ENCODE measurements at regions of chr6 and their contacts with region 1.

Region 1: DNA sequence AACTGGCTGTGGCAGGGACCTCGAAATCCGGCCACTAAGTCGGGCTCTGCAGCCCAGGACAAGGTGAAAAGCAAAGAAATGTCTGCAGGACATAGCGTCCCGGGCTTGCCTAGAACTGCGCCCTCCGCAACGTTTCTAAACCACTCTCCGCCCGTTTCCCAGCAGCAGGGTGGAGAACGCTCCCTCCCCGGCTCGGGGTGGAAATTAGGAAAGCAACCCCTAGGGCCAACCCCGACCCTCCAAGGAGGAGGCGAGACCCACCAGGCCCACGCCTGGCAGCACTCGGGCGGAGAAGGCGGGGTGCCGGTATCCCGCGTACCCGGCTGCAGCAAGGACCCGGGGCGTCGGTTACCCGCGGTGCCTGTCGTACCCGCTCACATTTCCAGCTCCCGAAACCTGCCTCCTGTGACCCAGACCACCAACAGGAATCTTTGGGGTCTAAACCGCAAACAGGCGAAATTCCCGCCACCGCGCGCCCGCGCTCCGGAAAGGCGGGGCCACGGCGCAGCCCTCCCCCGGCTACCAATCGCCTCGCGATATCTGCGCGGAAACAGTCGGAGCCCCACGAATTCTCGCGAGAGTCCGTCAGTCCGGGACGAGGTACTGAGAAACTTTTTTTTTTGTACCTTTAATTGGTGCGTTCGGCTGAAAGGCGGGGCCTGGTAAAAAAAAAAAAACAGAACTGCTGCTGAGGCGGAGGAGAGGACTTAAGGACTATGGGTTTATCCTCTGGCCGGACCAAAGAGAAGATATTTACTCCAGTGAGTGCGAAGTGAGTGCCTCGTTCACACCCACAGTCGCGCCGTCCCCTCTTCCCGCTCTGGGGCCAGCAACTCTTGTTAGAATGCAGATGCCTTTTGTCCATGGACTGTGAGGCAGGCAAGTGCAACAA is at the start of gene MMS22L:
- DNase-seq: peak; percentile 97
- H3K4me3 Mint-ChIP-seq: peak within 1 kb of the TSS; percentile 93
- H3K27ac Mint-ChIP-seq: peak within 1 kb of the TSS; percentile 81
- H3K4me1 Mint-ChIP-seq: peaks cover 21% of the 10 kb centered on the region
- H3K27me3 Mint-ChIP-seq: no peaks in the 10 kb centered on the region
- total RNA-seq, gene MMS22L: 34.1 to 37.4 TPM

Region 2: DNA sequence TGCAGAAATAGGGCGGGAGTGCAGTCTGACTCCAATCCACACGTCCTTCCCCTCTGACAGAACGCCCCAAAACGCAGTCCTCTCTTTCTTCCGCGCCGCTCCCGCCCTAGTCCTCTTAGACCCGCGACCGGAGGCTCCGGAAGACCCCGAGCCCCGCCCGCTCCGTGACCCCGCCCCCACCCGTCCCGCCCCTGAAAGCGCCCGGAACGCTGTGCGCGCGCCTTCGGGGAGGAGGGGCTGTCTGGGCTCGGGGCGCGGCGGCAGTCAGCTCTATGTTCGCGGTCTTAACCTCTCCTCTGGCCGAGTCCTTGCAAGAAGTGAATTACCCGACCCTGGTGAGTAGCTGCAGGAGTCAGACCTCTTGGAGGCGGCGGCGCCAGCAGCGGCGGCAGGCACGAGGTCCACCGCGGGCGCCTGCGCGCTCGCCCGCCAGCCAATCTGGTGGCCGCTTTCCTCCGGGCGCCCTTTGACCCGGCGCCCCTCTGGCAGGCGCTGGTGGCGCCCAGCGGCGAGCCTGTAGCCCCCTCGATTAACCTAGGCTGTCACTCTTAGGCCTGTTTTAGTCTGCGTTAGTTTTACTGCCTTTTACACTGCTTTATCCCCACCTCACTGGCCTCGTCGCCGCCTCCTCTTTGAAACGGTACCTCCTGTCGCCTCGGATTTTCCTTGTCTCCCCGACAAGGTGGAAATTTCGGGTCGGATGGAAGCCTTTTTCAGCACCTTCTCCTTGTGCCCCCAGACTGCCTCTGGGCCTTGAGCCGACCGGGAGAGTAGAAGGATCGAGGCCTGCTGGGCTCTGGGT is 1705.5 kb before region 1 on chr6 and contains the start of gene MANEA:
- CTCF ChIA-PET with region 1: no interaction called
- intact Hi-C with region 1: loop called (anchors 1 kb)
- DNase-seq: peak; percentile 80
- H3K4me3 Mint-ChIP-seq: peak within 1 kb of the TSS; percentile 96
- H3K27ac Mint-ChIP-seq: peak within 1 kb of the TSS; percentile 98
- H3K4me1 Mint-ChIP-seq: peaks cover 36% of the 10 kb centered on the region
- H3K27me3 Mint-ChIP-seq: no peaks in the 10 kb centered on the region
- total RNA-seq, gene MANEA: 14.0 to 16.0 TPM

Region 3: DNA sequence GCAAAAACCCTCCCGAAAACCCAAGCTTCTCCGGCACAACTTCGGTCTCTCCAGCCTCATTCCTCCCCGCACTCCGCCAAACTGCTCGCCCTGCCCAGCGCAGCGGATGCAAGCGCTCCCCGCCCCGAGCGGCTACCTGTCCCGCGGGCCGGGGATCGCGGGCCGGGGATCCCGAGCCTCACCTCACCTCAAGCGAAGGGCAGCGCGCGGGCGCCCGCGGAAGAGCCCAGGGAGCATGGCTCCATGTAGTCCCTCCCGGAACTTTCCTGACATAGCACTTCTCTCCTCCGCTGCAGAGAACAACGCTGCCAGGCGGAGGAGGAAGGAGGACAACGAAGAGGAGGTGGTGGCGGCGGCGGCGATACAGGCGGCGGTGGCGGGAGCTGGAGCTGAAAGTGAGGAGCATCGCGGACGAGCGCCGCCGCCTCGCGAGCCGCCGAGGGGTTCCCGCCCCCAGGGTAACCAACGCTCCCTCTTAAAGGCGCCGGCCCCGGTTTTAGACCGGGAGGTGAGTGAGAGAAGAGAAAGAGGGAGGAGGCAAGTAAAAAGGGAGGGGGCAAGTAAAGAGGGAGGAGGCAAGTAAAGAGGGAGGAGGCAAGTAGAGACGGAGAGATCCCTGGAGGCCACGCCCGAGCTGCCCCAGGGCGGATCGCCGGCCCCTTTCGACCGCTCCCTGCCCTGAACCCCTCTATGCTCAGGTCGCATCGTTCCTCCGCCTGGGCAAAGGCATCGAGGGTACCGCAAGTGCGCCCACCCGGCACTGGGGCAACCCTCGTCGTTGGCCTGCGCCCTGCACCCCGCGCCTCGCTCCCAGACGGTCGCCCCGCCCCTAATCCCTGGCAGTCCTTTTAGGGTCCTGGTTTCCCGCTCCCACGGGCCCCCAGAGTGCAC is 445.6 kb before region 1 on chr6 and contains the start of gene GPR63:
- CTCF ChIA-PET with region 1: no interaction called
- intact Hi-C with region 1: loop called (anchors 2 kb)
- DNase-seq: peak; percentile 75
- H3K4me3 Mint-ChIP-seq: peak within 1 kb of the TSS; percentile 82
- H3K27ac Mint-ChIP-seq: no peak within 1 kb of the TSS
- H3K4me1 Mint-ChIP-seq: peaks cover 10% of the 10 kb centered on the region
- H3K27me3 Mint-ChIP-seq: peaks cover 54% of the 10 kb centered on the region
- total RNA-seq, gene GPR63: 0.72 to 0.81 TPM

Region 4: GRCh38 chr6:97068211-97068610 is 214.8 kb before region 1 on chr6:
- CTCF ChIA-PET with region 1: no interaction called
- intact Hi-C with region 1: loop called (anchors 2 kb)
- DNase-seq: peak; percentile 49
- H3K4me3 Mint-ChIP-seq: no peak overlapping the region
- H3K27ac Mint-ChIP-seq: no peak overlapping the region
- H3K4me1 Mint-ChIP-seq: no peaks in the 10 kb centered on the region
- H3K27me3 Mint-ChIP-seq: no peaks in the 10 kb centered on the region

Region 5: DNA sequence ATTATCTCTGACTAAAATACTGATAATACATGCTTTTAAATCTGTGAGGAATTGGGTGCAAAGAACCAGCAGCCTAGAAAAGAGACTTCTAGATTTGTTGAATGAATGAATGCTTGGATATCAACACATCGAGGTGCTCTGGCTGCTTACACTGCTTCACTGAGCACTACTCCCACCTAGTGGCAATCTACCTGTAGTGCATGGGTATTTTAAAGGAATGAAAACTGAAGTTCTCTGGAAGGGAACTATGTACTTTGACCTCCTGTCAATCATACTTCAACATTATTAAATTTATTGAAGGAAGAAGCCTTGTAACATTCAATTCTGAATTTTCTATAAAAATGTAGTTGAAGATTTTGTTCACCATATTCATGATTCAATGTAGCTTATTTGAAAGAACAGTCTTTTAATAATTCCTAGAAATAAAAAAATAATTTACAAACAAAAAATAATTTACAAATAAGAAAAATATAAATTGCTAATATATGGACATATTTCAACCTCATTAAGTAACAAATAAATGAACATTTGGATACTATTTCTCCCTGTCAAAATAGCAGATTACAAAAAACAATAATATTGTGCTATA is 111.3 kb after region 1 on chr6:
- CTCF ChIA-PET with region 1: no interaction called
- intact Hi-C with region 1: loop called (anchors 2 kb)
- DNase-seq: peak; percentile 57
- H3K4me3 Mint-ChIP-seq: no peak overlapping the region
- H3K27ac Mint-ChIP-seq: no peak overlapping the region
- H3K4me1 Mint-ChIP-seq: no peaks in the 10 kb centered on the region
- H3K27me3 Mint-ChIP-seq: peaks cover 10% of the 10 kb centered on the region

Region 6: GRCh38 chr6:98947351-98948292 is 1664.7 kb after region 1 on chr6 and contains the start of gene FBXL4:
- CTCF ChIA-PET with region 1: no interaction called
- intact Hi-C with region 1: loop called (anchors 1 kb)
- DNase-seq: peak; percentile 84
- H3K4me3 Mint-ChIP-seq: peak within 1 kb of the TSS; percentile 93
- H3K27ac Mint-ChIP-seq: peak within 1 kb of the TSS; percentile 93
- H3K4me1 Mint-ChIP-seq: peaks cover 34% of the 10 kb centered on the region
- H3K27me3 Mint-ChIP-seq: peaks cover 2% of the 10 kb centered on the region
- total RNA-seq, gene FBXL4: 16.3 to 16.7 TPM

Measured in activated naive CD4-positive, alpha-beta T cell treated with anti-CD3 and anti-CD28 coated beads for 36 hours (primary cell).